H1 (cell line): ENCODE measurements at regions of chr5 and their contacts with region 1.

Region 1: GRCh38 chr5:97044052-97044451 is 98.4 kb downstream of the LIX1 start:
- DNase-seq: peak; percentile 50 to 75
- H3K4me3 ChIP-seq: no peak overlapping the region
- H3K27ac ChIP-seq: no peak overlapping the region
- H3K4me1 ChIP-seq: peaks cover 0 to 3% (median under 1%) of the 10 kb centered on the region in 4 experiments; a peak in 3 of 7 replicates
- H3K27me3 ChIP-seq: no peaks in the 10 kb centered on the region
- CTCF ChIP-seq: peak; percentile 88 to 99 (median 88)
- EP300 ChIP-seq: no peak
- POLR2A ChIP-seq: no peak
- RAD21 ChIP-seq: peak; percentile 95 to 97

Region 2: GRCh38 chr5:96868603-96869371 is 175.3 kb before region 1 on chr5:
- CTCF ChIA-PET with region 1: interaction called, 27 read pairs
- POLR2A ChIA-PET with region 1: no interaction called
- DNase-seq: no peak
- H3K4me3 ChIP-seq: no peak overlapping the region
- H3K27ac ChIP-seq: no peak overlapping the region
- H3K4me1 ChIP-seq: peaks cover 0 to 8% (median 5%) of the 10 kb centered on the region in 4 experiments; a peak in 4 of 7 replicates
- H3K27me3 ChIP-seq: no peaks in the 10 kb centered on the region
- CTCF ChIP-seq: peak in 2 of 3 experiments; percentile 81 to 92; a peak in 3 of 4 replicates
- EP300 ChIP-seq: no peak
- POLR2A ChIP-seq: no peak
- RAD21 ChIP-seq: peak; percentile 94 to 95

Region 3: DNA sequence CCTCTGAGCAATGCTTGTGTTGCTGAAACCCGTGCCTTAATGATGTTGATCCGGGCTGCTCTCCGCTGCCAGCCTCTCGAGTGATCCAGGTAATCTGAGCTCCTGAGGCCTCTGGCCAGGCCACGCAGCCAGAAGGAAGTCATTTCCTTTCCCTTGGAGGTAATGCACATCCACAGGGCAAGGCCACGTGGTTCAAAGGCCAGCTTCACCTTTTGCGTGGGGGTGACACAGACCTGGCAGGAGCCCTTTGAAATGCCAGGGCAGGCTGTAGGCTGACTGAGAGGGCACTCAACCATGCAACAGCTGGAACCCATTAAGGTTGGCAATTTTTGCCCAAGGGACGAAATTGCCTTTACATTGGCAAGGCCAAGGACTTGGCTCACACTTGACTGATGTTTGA is 18.0 kb after region 1 on chr5:
- CTCF ChIA-PET with region 1: interaction called, 10 read pairs
- POLR2A ChIA-PET with region 1: interaction called, 3 read pairs
- DNase-seq: no peak
- H3K4me3 ChIP-seq: no peak overlapping the region
- H3K27ac ChIP-seq: no peak overlapping the region
- H3K4me1 ChIP-seq: peaks cover 0 to 4% (median 1%) of the 10 kb centered on the region in 4 experiments; a peak in 2 of 7 replicates
- H3K27me3 ChIP-seq: no peaks in the 10 kb centered on the region
- CTCF ChIP-seq: no peak
- EP300 ChIP-seq: no peak
- POLR2A ChIP-seq: no peak
- RAD21 ChIP-seq: no peak

Region 4: DNA sequence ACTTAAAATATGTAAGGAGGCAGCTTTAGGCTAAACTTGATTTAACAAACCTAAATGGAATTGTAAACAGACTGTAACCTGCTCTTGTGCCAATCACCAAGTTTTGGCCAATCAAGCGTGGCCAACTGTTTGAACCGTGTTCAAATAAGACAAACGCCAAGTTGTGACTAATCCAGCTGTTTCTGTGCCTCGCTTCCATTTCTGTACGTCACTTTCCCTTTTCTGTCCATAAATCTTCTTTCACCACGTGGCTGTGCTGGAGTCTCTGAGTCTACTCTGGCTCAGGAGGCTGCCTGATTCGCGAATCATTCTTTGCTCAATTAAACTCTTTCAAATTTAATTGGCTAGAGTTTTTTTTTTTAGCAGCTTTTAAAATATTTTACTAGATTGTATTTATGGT is 27.0 kb after region 1 on chr5:
- CTCF ChIA-PET with region 1: interaction called, 10 read pairs
- POLR2A ChIA-PET with region 1: interaction called, 3 read pairs
- DNase-seq: no peak
- H3K4me3 ChIP-seq: no peak overlapping the region
- H3K27ac ChIP-seq: no peak overlapping the region
- H3K4me1 ChIP-seq: peaks cover 0 to 3% (median 0%) of the 10 kb centered on the region in 4 experiments; a peak in 1 of 7 replicates
- H3K27me3 ChIP-seq: no peaks in the 10 kb centered on the region
- CTCF ChIP-seq: no peak
- EP300 ChIP-seq: no peak
- POLR2A ChIP-seq: no peak
- RAD21 ChIP-seq: no peak

Region 5: DNA sequence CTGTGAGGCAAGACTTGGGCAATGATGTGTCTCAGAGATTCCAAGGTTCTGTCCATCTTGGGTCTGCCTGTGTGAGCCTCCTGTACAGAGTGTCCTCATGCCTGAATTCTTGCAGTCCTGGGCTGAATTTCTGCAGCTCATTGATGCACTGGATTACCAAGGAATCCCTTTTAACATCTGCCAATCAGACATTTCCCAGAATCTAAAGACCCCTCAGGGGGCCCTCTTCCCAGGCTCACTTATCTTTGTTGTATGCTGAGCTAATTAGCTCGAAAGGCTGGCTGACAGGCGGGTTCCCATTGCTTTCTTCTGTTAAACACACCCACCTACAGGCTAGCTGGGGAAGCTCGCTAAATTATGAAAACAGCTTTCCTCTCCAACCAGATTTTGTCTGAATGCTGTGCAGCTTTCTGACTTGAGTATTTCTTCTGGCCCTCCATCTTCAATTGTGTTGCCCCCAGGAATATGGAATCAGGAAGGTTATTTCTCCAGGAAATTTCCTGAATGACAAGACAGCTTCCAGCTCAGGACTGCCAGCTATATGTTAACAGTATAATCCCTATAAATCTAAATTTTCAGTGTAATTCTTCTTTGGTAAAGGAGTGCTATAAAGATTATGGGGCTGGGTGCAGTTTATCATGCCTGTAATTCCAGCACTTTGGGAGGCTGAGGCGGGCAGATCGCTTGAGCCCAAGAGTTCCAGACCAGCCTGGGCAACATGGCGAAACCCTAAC is 98.6 kb after region 1 on chr5 and contains the start of gene LIX1:
- CTCF ChIA-PET with region 1: interaction called, 160 read pairs
- POLR2A ChIA-PET with region 1: no interaction called
- DNase-seq: peak in 1 of 2 experiments; percentile 62
- H3K4me3 ChIP-seq: peak within 1 kb of the TSS in 1 of 4 experiments; percentile 12; a peak in 3 of 8 replicates
- H3K27ac ChIP-seq: no peak within 1 kb of the TSS
- H3K4me1 ChIP-seq: peaks cover 0 to 6% (median 2%) of the 10 kb centered on the region in 4 experiments; a peak in 4 of 7 replicates
- H3K27me3 ChIP-seq: no peaks in the 10 kb centered on the region
- CTCF ChIP-seq: peak; percentile 23 to 76 (median 70)
- EP300 ChIP-seq: no peak
- POLR2A ChIP-seq: no peak
- RAD21 ChIP-seq: peak; percentile 91 to 93
- total RNA-seq, gene LIX1: 0.26 and 0.33 TPM in 2 replicates

Region 6: DNA sequence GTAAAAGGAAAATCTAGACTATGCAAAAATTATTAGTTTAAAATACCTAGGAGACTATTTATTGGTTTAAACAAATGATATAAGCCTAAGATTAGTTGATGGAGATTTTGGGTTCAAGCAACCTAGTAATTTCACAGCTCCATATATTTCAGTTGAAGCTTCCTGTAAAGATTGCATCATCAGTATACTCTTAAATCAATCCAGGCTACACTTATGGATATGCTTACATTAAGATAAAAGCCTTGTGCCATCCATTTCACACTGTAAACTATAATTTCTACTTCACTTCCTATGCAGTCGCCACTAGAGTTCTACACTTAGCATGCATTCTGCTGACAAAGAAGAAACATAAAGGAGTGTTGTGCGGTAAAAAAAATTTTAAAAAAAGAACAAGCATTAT is 105.7 kb after region 1 on chr5:
- CTCF ChIA-PET with region 1: interaction called, 160 read pairs
- POLR2A ChIA-PET with region 1: no interaction called
- DNase-seq: no peak
- H3K4me3 ChIP-seq: no peak overlapping the region
- H3K27ac ChIP-seq: no peak overlapping the region
- H3K4me1 ChIP-seq: no peaks in the 10 kb centered on the region
- H3K27me3 ChIP-seq: no peaks in the 10 kb centered on the region
- CTCF ChIP-seq: no peak
- EP300 ChIP-seq: no peak
- POLR2A ChIP-seq: no peak
- RAD21 ChIP-seq: no peak